ENCODE measurements at regions of chr13 and their contacts with region 1.

Region 1: GRCh38 chr13:25171517-25172302 is at the start of gene AMER2:
- DNase-seq: peak; percentile 86
- H3K4me3 ChIP-seq: peak within 1 kb of the TSS; percentile 75
- H3K27ac ChIP-seq: peak within 1 kb of the TSS; percentile 96
- H3K4me1 ChIP-seq: peaks cover 37% of the 10 kb centered on the region
- H3K27me3 ChIP-seq: no peaks in the 10 kb centered on the region
- CTCF ChIP-seq: 0 out of 2 replicates have a peak, but pooled peaks have one; percentile 11
- total RNA-seq, gene AMER2: 49.7 and 70.6 TPM in 2 replicates

Region 2: DNA sequence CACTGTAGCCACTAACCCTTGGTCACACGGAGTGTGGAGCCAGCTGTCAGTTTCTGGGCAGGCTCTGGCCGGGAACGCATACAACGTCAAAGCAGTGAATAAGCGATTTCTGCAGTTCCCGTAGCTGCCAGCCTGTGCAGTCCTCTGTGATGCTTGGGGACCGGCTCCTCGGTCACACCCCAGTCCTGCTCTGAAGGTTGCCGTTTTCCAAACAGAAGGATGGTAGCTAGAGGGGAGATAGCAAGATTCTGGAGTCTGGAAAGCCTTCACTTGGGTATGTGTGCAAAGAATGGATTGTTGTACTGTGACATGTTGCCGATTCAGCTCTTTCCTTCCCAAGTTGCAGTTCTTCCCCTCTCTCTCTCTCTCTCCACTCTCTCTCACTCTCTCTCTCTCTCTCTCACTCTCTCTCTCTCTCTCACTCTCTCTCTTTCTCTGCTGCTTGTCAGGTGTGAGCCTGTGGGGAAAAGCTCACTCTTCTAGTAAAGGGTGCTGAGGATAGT is 901.0 kb before region 1 on chr13:
- CTCF ChIA-PET with region 1: no interaction called
- POLR2A ChIA-PET with region 1: no interaction called
- intact Hi-C with region 1: loop called (anchors 5 kb)
- DNase-seq: peak; percentile 74
- H3K4me3 ChIP-seq: peak overlapping the region; percentile 53
- H3K27ac ChIP-seq: peak overlapping the region; percentile 97
- H3K4me1 ChIP-seq: peaks cover 32% of the 10 kb centered on the region
- H3K27me3 ChIP-seq: no peaks in the 10 kb centered on the region
- CTCF ChIP-seq: peak; percentile 24; the same call in 1 of the 2 replicates

Region 3: GRCh38 chr13:25132751-25133390 is 38.8 kb before region 1 on chr13:
- CTCF ChIA-PET with region 1: interaction called, 5 read pairs
- POLR2A ChIA-PET with region 1: interaction called, 3 read pairs
- intact Hi-C with region 1: loop called (anchors 5 kb)
- DNase-seq: peak; percentile 69
- H3K4me3 ChIP-seq: no peak overlapping the region
- H3K27ac ChIP-seq: peak overlapping the region; percentile 77
- H3K4me1 ChIP-seq: peaks cover 48% of the 10 kb centered on the region
- H3K27me3 ChIP-seq: no peaks in the 10 kb centered on the region
- CTCF ChIP-seq: no peak

Region 4: GRCh38 chr13:25203127-25203740 is 31.5 kb after region 1 on chr13:
- CTCF ChIA-PET with region 1: no interaction called
- POLR2A ChIA-PET with region 1: no interaction called
- intact Hi-C with region 1: no loop called
- DNase-seq: no peak
- H3K4me3 ChIP-seq: no peak overlapping the region
- H3K27ac ChIP-seq: no peak overlapping the region
- H3K4me1 ChIP-seq: no peaks in the 10 kb centered on the region
- H3K27me3 ChIP-seq: no peaks in the 10 kb centered on the region
- CTCF ChIP-seq: no peak

Region 5: DNA sequence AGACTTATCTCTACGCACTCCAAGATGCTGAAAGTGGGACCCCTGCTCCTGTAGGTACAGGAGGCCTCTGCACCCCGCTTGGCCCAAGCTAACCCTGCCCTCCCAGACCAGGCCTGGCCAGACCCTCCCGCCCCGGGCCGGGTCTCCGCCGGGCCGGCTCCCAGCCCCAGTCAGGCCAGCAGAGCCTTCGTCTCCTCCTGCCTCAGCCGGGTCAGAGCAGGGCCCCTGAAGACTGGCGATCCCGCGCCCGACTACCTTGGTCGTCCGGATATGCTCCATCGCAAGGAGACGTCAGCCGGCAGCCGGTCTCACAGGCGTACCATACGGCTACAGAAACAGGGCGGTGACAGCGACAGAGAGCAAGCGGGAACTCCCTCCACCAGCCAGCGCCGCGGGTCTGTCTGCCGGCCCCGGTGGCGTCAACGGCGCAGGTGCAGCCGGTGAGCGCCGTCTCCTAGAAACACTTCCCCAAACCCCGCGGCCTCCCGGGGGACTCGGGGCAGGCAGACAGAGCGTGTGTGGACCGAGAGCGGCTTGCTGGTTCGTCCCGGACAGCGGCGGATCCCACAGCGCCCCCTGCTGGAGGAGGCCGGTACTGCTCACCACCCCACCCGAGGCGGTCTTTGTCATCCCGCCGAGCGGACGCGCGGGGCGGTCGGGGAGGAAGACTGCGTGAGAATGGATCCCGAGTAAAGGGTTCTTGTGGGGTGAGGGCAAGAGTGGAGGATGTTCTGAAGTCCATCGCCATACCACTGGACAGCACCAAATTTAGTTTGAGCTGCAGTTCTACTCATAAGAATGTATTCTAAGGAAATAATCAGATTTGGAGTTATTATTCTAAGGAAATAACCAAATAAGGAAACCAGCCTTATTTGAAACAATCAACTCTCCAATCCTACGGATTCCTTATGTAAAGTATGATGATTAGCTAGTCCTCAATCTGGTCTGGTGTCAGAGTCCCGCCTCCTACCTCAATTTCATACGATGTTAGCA is 115.6 kb after region 1 on chr13 and contains the start of gene MTMR6:
- CTCF ChIA-PET with region 1: no interaction called
- POLR2A ChIA-PET with region 1: no interaction called
- intact Hi-C with region 1: loop called (anchors 5 kb)
- DNase-seq: peak; percentile 93
- H3K4me3 ChIP-seq: peak within 1 kb of the TSS; percentile 98
- H3K27ac ChIP-seq: peak within 1 kb of the TSS; percentile 93
- H3K4me1 ChIP-seq: peaks cover 38% of the 10 kb centered on the region
- H3K27me3 ChIP-seq: no peaks in the 10 kb centered on the region
- CTCF ChIP-seq: peak; percentile 99
- total RNA-seq, gene MTMR6: 27.3 and 28.9 TPM in 2 replicates

Region 6: GRCh38 chr13:25301347-25302047 is 129.8 kb after region 1 on chr13 and contains the start of gene NUP58:
- CTCF ChIA-PET with region 1: no interaction called
- POLR2A ChIA-PET with region 1: no interaction called
- intact Hi-C with region 1: loop called (anchors 5 kb)
- DNase-seq: peak; percentile 97
- H3K4me3 ChIP-seq: peak within 1 kb of the TSS; percentile 79
- H3K27ac ChIP-seq: peak within 1 kb of the TSS; percentile 91
- H3K4me1 ChIP-seq: peaks cover 12% of the 10 kb centered on the region
- H3K27me3 ChIP-seq: no peaks in the 10 kb centered on the region
- CTCF ChIP-seq: no peak
- total RNA-seq, gene NUP58: 101 TPM in 2 replicates

Measured in A673 (cell line).